ENCODE measurements at regions of chr3 and their contacts with region 1.

Region 1: GRCh38 chr3:120558771-120559241 is 37.3 kb upstream of the NDUFB4 start:
- DNase-seq: peak; percentile 81
- H3K4me3 Mint-ChIP-seq: peak overlapping the region; percentile 79
- H3K27ac Mint-ChIP-seq: peak overlapping the region; percentile 68
- H3K4me1 Mint-ChIP-seq: peaks cover 23% of the 10 kb centered on the region
- H3K27me3 Mint-ChIP-seq: peaks cover 2% of the 10 kb centered on the region

Region 2: DNA sequence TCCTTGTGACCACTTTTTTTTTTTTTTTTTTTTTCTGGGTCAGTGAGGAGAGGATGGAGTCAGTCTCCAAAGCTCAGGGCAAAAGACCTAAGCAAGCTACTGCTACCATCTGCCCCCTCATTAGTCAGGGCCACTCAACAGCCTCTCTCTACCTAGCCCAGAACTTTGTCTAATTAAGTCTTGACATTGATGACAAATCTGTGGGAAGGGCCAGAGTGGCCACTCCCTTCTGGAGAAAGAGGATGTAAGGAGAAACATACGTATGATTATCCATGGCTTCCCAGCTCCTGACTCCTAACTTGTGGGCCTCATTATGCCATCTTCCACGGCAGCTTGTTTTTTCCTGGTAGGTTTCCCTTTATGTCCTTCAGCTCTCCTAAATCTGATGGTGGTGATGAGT is 739.0 kb before region 1 on chr3:
- intact Hi-C with region 1: loop called (anchors 5 kb)
- DNase-seq: no peak
- H3K4me3 Mint-ChIP-seq: no peak overlapping the region
- H3K27ac Mint-ChIP-seq: no peak overlapping the region
- H3K4me1 Mint-ChIP-seq: no peaks in the 10 kb centered on the region
- H3K27me3 Mint-ChIP-seq: peaks cover 1% of the 10 kb centered on the region

Region 3: GRCh38 chr3:120245386-120245785 is 313.4 kb before region 1 on chr3:
- intact Hi-C with region 1: loop called (anchors 1 kb)
- DNase-seq: no peak
- H3K4me3 Mint-ChIP-seq: no peak overlapping the region
- H3K27ac Mint-ChIP-seq: no peak overlapping the region
- H3K4me1 Mint-ChIP-seq: no peaks in the 10 kb centered on the region
- H3K27me3 Mint-ChIP-seq: peaks cover 26% of the 10 kb centered on the region

Region 4: GRCh38 chr3:120284747-120285507 is 273.9 kb before region 1 on chr3 and contains the start of gene GPR156:
- intact Hi-C with region 1: no loop called
- DNase-seq: no peak
- H3K4me3 Mint-ChIP-seq: peak within 1 kb of the TSS; percentile 35
- H3K27ac Mint-ChIP-seq: no peak within 1 kb of the TSS
- H3K4me1 Mint-ChIP-seq: no peaks in the 10 kb centered on the region
- H3K27me3 Mint-ChIP-seq: peaks cover 44% of the 10 kb centered on the region
- total RNA-seq, gene GPR156: 0.18 TPM in 1 of 2 replicates, not detected in the other

Region 5: DNA sequence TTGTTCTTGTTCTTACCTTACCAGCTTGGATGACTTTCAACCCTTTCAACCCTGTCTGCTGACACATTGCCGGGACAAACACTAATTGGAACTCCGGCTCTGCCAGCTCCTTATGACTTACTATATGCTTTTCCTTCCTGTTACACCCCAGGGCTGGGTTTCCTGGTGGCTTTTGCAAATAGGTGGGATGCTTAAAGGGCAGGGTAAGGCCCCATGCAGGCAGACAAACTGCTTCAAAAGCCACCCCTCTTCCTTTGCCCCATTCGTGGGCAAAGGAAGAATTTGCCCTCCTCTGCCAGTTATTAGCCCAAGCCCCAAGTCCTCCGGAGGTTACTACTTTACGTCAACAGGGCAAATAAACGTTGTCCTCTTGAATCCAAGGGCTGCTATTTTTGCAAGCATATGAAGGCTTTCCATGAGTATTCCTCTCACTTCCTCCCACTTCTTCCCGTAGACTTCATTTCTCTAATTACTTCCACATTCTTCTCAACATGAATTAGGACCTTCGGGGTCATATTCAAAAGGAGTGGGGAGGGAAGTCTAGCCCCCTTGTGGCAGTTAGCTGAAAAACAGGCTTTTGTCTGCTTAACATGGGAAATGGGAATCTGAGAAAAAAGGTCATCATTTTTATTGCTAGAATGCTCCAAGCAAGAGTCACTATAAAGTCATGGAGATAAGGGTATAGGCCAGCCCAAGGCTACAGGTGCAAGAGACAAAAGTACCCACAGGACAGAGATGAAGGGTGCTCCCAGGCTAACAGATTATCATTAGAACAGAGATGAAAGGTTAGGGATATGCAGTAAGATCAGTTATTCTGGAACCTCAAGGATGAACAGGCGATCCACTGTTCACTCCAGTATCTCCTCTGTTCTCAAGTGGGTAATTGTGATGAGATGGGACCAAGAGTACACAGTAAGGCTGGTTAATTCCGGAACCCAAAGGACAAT is 51.7 kb before region 1 on chr3:
- intact Hi-C with region 1: loop called (anchors 5 kb)
- DNase-seq: no peak
- H3K4me3 Mint-ChIP-seq: no peak overlapping the region
- H3K27ac Mint-ChIP-seq: no peak overlapping the region
- H3K4me1 Mint-ChIP-seq: no peaks in the 10 kb centered on the region
- H3K27me3 Mint-ChIP-seq: peaks cover 9% of the 10 kb centered on the region

Region 6: DNA sequence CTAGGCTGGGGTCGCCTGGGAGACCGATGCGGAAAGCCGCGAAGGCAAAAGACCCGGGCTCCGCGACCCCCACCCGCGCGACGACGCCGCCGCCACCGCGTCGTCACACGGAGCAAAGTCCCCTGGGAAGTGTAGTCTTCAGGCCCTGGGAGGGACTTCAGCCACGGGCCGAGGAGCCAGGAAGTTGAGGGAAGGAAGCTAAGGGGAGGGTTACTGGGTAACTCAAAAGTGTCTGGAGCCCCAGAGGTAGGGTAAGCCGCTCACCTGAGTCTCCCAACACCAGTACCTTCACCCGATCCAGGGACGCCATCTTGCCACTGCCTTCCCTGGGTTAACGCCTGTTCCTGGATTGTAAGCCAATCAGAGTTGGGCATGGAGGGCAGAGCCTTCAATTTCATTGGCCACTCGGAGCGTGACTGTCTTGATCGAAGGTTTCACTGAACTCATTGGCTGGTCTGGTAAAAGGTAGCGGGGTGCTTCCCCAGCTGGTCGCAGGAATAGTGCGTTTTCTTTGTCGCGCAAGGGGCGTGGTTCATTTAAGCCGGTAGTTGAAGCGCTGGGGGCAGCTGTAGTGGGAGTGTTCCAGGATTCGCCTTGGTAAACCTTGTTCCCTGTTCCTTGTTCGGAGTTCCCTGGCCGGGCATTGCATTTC is 183.5 kb after region 1 on chr3 and contains the starts of genes GTF2E1 and RABL3:
- intact Hi-C with region 1: loop called (anchors 1 kb)
- DNase-seq: peak; percentile 95
- H3K4me3 Mint-ChIP-seq: peak within 1 kb of the TSS; percentile 84
- H3K27ac Mint-ChIP-seq: peak within 1 kb of the TSS; percentile 89
- H3K4me1 Mint-ChIP-seq: peaks cover 22% of the 10 kb centered on the region
- H3K27me3 Mint-ChIP-seq: no peaks in the 10 kb centered on the region
- total RNA-seq, gene GTF2E1: 25.3 and 29.2 TPM in 2 replicates
- total RNA-seq, gene RABL3: 24.3 and 25.6 TPM in 2 replicates